ENCODE measurements at regions of chr1 and their contacts with region 1.

Region 1: GRCh38 chr1:150259758-150260669 is 2.4 kb downstream of the CA14 start:
- DNase-seq: no peak
- H3K4me3 ChIP-seq: no peak overlapping the region
- H3K27me3 ChIP-seq: peaks cover 6% of the 10 kb centered on the region
- CTCF ChIP-seq: no peak

Region 2: DNA sequence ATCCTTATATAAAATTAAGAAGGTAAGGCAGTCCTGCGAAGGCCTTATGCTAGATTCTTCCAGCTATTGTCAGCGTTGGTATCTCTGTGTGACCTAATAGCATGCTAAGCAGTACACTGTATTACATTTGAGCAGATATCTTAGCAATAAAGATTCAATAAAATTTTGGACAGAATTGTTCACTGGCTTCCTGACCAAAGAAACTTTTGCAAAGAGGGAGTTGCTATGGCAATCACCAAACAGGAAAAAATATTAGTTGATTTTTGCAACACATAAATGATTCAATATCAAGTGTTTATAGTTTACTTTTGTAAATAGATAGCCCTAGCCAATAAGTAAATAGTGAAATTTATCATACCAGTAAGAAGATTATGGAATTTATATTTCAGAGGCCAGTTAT is 141.3 kb before region 1 on chr1:
- CTCF ChIA-PET with region 1: no interaction called
- POLR2A ChIA-PET with region 1: no interaction called
- DNase-seq: no peak
- H3K4me3 ChIP-seq: no peak overlapping the region
- H3K27me3 ChIP-seq: no peaks in the 10 kb centered on the region
- CTCF ChIP-seq: no peak

Region 3: GRCh38 chr1:150132372-150132771 is 127.6 kb before region 1 on chr1:
- CTCF ChIA-PET with region 1: no interaction called
- POLR2A ChIA-PET with region 1: no interaction called
- DNase-seq: no peak
- H3K4me3 ChIP-seq: no peak overlapping the region
- H3K27me3 ChIP-seq: no peaks in the 10 kb centered on the region
- CTCF ChIP-seq: no peak

Region 4: GRCh38 chr1:150235852-150236613 is 24.0 kb before region 1 on chr1 and contains the start of gene ANP32E:
- CTCF ChIA-PET with region 1: interaction called, 19 read pairs
- POLR2A ChIA-PET with region 1: no interaction called
- DNase-seq: peak; percentile 98
- H3K4me3 ChIP-seq: peak within 1 kb of the TSS; percentile 67
- H3K27me3 ChIP-seq: no peaks in the 10 kb centered on the region
- CTCF ChIP-seq: 0 out of 2 replicates have a peak, but pooled peaks have one; percentile 13
- polyA plus RNA-seq, gene ANP32E: 6.1 and 14.8 TPM in 2 replicates

Region 5: GRCh38 chr1:150243003-150243402 is 17.0 kb before region 1 on chr1:
- CTCF ChIA-PET with region 1: interaction called, 19 read pairs
- POLR2A ChIA-PET with region 1: no interaction called
- DNase-seq: no peak
- H3K4me3 ChIP-seq: no peak overlapping the region
- H3K27me3 ChIP-seq: no peaks in the 10 kb centered on the region
- CTCF ChIP-seq: no peak

Region 6: DNA sequence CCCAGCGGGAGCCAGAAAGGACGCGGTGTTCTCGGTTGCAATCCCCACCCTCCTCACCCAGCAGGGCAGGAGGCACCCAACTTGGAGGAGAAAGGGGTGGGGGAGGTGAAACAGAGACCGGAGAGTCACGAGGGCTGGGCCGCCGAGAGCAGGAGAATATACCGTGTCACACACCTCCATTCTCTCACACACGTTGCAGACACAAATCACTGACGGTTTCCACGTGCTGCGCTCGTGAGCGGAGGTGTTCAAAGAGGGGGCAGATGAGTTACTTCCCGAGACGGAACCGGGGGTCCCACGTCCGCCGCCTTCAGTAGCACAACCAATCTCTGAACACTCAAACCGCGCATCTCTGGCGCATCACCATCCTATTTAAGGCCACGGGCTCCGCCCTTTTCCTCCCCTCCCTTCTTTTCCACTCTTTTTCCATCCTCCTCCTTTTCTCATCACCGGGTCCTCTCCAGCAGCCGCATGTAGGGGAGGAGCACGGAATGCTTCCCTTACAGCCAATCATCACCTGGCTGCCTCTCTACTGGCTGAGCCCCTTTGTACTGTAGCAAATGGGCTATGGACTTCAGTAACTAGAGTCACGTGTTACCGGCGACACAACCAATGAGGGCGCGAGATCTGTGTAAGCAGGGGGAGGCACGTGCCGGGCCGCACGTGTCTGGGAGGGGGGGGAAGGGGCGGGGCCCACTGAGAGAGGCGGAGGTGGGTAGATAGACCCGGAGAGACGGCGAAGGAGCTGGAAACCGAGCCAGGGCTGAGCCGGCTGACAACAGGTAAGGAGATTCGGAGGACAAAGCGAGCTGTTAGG is 22.0 kb after region 1 on chr1 and contains the start of gene CIART:
- CTCF ChIA-PET with region 1: interaction called, 208 read pairs
- POLR2A ChIA-PET with region 1: no interaction called
- DNase-seq: peak; percentile 98
- H3K4me3 ChIP-seq: peak within 1 kb of the TSS; percentile 67
- H3K27me3 ChIP-seq: no peaks in the 10 kb centered on the region
- CTCF ChIP-seq: no peak
- polyA plus RNA-seq, gene CIART: 17.2 and 18.7 TPM in 2 replicates

Region 7: DNA sequence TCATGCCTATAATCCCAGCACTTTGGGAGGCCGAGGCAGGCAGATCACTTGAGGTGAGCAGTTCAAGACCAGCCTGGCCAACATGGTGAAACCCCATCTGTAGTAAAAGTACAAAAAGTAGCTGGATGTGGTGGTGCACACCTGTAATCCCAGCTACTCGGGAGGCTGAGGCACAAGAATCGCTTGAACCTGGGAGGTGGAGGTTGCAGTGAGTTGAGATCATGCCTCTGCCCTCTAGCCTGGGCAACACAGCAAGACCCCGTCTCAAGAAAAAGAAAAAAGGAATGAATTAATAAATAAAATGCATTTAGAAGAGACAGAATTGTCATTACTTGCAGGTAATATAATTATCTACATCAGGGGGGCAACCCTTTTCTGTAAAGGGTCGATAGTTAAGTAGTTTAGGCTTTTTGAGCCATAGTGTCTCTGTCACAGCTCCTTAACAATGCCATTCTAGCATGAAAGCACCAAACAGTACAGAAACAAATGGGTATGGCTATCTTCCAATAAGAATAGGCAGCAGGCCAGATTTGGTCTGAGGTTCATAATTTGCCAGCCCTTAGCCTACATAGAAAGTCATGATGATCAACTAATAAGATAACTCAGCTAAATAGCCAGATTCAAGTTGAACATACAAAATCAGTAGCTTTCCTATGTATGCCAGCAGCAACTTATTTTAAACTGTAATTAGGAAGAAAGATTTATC is 160.7 kb after region 1 on chr1:
- CTCF ChIA-PET with region 1: no interaction called
- POLR2A ChIA-PET with region 1: no interaction called
- DNase-seq: no peak
- H3K4me3 ChIP-seq: no peak overlapping the region
- H3K27me3 ChIP-seq: no peaks in the 10 kb centered on the region
- CTCF ChIP-seq: no peak